ENCODE measurements at regions of chr6 and their contacts with region 1.

Region 1: GRCh38 chr6:166786704-166787293 is 159.7 kb upstream of the RPS6KA2 start:
- DNase-seq: peak; percentile 27
- H3K4me3 ChIP-seq: no peak overlapping the region
- H3K27ac ChIP-seq: no peak overlapping the region
- H3K4me1 ChIP-seq: no peaks in the 10 kb centered on the region
- H3K27me3 ChIP-seq: no peaks in the 10 kb centered on the region
- CTCF ChIP-seq: peak; percentile 71

Region 2: DNA sequence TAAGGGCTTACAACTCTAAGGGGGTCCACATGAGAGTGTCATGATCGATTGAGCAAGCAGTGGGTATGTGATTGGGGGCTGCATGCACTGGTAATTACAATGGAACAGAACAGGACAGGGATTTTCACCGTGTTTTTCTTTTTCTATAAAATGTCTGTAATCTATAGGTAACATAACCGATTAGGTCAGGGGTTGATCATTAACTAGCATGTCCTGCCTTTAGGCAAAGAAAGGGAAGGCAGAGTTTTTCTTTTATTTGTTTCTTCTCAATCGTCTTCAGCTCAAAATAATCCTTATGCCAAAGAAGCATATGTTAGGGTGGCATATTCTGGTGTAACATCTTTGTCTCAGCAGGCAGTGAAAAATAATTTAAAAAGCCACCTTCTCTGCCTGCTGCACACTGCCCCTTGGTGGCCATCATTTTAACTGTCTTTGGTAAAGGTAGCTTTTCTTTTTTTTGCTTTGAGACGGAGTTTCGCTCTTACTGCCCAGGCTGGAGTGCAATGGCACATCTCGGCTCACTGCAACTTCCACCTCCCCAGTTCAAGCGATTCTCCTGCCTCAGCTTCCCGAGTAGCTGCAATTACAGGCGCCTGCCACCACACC is 202.7 kb after region 1 on chr6:
- intact Hi-C with region 1: loop called (anchors 5 kb)
- DNase-seq: no peak
- H3K4me3 ChIP-seq: no peak overlapping the region
- H3K27ac ChIP-seq: no peak overlapping the region
- H3K4me1 ChIP-seq: no peaks in the 10 kb centered on the region
- H3K27me3 ChIP-seq: no peaks in the 10 kb centered on the region
- CTCF ChIP-seq: peak; percentile 43

Measured in colonic mucosa (tissue), 4 donors.